Right lobe of liver (tissue), 6 donors: ENCODE measurements at regions of chr19 and their contacts with region 1.

Region 1: DNA sequence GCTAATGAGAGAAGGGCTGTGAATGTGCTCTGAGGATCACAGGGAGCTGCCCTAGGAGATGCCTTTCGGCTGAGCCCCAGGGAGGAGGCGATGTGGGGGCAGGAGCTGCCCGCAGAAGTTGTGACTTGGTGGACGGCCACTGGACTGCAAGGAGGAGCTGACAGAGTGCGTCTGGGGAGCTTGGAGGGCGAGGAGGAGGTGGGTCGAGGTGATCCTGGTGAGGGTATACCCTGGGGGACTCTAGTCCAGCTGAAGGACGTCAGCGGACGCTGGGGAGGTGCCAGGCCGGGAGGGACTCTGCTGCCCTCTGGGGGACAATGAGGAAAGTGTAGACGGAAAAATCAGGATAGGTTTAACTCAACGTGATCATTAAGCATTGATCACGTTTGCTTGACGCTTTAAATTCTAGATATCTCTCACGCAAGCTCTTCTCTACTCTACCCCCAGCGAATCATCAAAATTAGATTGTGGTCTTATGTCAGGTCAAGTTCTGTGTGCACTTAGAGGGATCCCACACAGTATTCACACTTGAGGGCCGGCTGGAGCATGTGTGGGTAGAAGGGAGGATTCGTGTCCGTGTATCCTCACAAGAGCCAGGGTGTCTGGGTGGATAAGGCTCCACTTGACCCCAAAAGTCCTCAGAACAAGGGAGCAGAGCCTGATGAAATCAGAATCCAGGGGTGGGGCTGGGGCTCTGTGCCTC is 3.3 kb upstream of the CEACAM7 start:
- DNase-seq: peak in 1 of 3 donors; percentile 55
- ATAC-seq: peak; percentile 28 to 54 (median 50)
- H3K4me3 ChIP-seq: no peak overlapping the region
- H3K27ac ChIP-seq: no peak overlapping the region
- H3K4me1 ChIP-seq: no peaks in the 10 kb centered on the region
- H3K27me3 ChIP-seq: no peaks in the 10 kb centered on the region
- CTCF ChIP-seq: peak; percentile 22 to 58 (median 46)
- POLR2A ChIP-seq: no peak

Region 2: DNA sequence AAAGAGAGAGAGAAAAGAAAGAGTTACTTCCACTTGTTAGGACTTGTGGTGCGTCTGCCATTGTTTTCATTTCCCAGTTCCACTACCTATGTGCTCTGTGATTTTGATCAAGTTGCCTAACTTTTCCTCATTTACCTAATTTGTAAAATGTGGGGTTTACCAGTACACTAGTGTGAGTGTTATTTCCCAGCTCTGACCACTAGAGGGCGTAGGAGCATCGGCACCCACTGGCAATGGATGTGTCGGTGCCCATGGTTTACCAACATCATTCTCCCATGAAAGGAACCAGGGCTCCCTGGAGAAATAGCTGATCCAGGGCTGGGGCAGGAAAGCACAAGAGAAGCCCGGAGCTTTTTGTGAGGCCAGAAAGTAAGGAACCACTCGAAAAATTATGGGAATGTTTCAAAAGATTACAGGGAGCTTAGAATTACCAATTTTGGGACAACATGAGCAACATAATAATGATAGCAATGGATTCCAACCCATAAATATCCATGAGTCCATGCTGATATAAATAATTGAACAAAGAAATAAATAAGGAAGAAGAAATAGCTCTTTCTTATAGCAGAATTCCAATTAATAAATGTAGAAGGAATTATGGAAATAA is 49.4 kb before region 1 on chr19:
- intact Hi-C with region 1: loop called in 1 of 2 experiments (anchors 10 kb)
- DNase-seq: peak in 1 of 3 donors; percentile 54
- ATAC-seq: peak; percentile 86 to 94 (median 90)
- H3K4me3 ChIP-seq: no peak overlapping the region
- H3K27ac ChIP-seq: no peak overlapping the region
- H3K4me1 ChIP-seq: no peaks in the 10 kb centered on the region
- H3K27me3 ChIP-seq: no peaks in the 10 kb centered on the region
- CTCF ChIP-seq: peak; percentile 77 to 88 (median 86)
- POLR2A ChIP-seq: no peak

Region 3: GRCh38 chr19:41775360-41775695 is 83.9 kb after region 1 on chr19:
- intact Hi-C with region 1: no loop called
- DNase-seq: no peak
- ATAC-seq: no peak
- H3K4me3 ChIP-seq: no peak overlapping the region
- H3K27ac ChIP-seq: no peak overlapping the region
- H3K4me1 ChIP-seq: no peaks in the 10 kb centered on the region
- H3K27me3 ChIP-seq: no peaks in the 10 kb centered on the region
- CTCF ChIP-seq: no peak
- POLR2A ChIP-seq: no peak

Region 4: DNA sequence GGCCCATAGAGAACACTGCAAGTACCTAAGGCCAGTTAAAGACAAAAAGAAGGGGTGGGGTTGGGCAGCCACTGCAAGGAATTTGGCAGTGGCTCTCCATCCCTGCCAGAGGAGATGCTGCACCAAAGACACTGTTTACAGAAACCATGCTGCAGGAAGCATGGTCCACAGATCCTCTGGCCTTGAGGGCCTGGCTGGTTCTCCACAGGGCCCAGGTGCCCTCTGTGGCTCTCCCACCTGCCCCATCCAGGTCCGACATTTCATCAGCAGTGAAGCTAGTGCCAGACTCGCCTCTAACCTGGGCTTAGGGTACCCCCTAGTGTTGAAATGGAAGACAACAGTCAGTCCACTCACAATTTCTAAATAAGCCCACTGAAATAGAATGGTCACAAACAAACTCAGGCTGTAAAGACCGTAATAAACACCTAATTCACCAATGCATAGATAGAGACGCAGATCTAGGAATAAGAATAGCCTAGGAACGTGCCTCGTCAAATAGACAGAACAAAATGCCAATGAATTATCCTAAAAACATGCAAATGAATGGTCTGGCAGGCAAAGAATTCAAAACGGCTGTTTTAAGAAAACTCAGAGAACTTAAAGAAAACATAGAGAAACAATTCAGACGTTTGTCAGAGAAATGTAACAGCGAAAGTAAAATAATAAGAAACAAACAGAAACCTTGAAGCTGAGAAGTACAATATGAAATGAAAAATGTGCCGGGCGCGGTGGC is 129.8 kb after region 1 on chr19:
- intact Hi-C with region 1: no loop called
- DNase-seq: no peak
- ATAC-seq: peak; percentile 69 to 84 (median 72)
- H3K4me3 ChIP-seq: no peak overlapping the region
- H3K27ac ChIP-seq: no peak overlapping the region
- H3K4me1 ChIP-seq: no peaks in the 10 kb centered on the region
- H3K27me3 ChIP-seq: no peaks in the 10 kb centered on the region
- CTCF ChIP-seq: peak; percentile 51 to 66 (median 56)
- POLR2A ChIP-seq: no peak

Region 5: GRCh38 chr19:41837981-41838708 is 146.7 kb after region 1 on chr19:
- intact Hi-C with region 1: no loop called
- DNase-seq: no peak
- ATAC-seq: no peak
- H3K4me3 ChIP-seq: no peak overlapping the region
- H3K27ac ChIP-seq: no peak overlapping the region
- H3K4me1 ChIP-seq: no peaks in the 10 kb centered on the region
- H3K27me3 ChIP-seq: no peaks in the 10 kb centered on the region
- CTCF ChIP-seq: no peak
- POLR2A ChIP-seq: no peak